Activated CD4-positive, alpha-beta T cell treated with anti-CD3 and anti-CD28 coated beads for 36 hours (primary cell): ENCODE measurements at regions of chr3 and their contacts with region 1.

Region 1: GRCh38 chr3:57007513-57008460 is 52.7 kb upstream of the SPATA12 start:
- DNase-seq: peak; percentile 53
- ATAC-seq: peak; percentile 83
- H3K4me3 Mint-ChIP-seq: no peak overlapping the region
- H3K27ac Mint-ChIP-seq: peak overlapping the region; percentile 59
- H3K4me1 Mint-ChIP-seq: peaks cover 5% of the 10 kb centered on the region
- H3K27me3 Mint-ChIP-seq: peaks cover 2% of the 10 kb centered on the region

Region 2: GRCh38 chr3:56878074-56878473 is 129.7 kb before region 1 on chr3:
- CTCF ChIA-PET with region 1: no interaction called
- POLR2A ChIA-PET with region 1: no interaction called
- intact Hi-C with region 1: no loop called
- DNase-seq: peak; percentile 79
- ATAC-seq: peak; percentile 87
- H3K4me3 Mint-ChIP-seq: peak overlapping the region; percentile 64
- H3K27ac Mint-ChIP-seq: peak overlapping the region; percentile 94
- H3K4me1 Mint-ChIP-seq: peaks cover 90% of the 10 kb centered on the region
- H3K27me3 Mint-ChIP-seq: no peaks in the 10 kb centered on the region

Region 3: DNA sequence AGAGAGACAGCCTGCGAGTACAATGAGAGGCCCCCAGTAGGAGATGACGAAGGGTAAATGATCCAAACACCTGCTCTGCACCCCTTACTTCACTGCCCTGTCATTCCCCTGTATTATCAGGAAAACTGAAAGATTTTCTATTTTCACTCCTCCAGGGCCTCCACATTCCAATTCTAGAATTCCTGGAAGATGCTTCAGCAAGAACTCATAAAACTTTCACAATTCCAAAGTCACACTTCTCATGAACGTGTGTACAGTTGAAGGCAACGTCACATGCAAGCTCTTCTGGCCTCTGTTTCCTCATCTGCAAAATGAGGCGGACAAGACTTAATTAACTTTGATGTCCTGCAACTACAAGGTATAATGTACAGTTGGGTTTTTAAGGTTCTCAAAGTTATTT is 10.1 kb before region 1 on chr3:
- CTCF ChIA-PET with region 1: interaction called, 30 read pairs
- POLR2A ChIA-PET with region 1: no interaction called
- intact Hi-C with region 1: no loop called
- DNase-seq: no peak
- ATAC-seq: no peak
- H3K4me3 Mint-ChIP-seq: no peak overlapping the region
- H3K27ac Mint-ChIP-seq: no peak overlapping the region
- H3K4me1 Mint-ChIP-seq: peaks cover 3% of the 10 kb centered on the region
- H3K27me3 Mint-ChIP-seq: no peaks in the 10 kb centered on the region

Region 4: GRCh38 chr3:57370341-57370740 is 362.6 kb after region 1 on chr3:
- CTCF ChIA-PET with region 1: no interaction called
- POLR2A ChIA-PET with region 1: no interaction called
- intact Hi-C with region 1: no loop called
- DNase-seq: no peak
- ATAC-seq: no peak
- H3K4me3 Mint-ChIP-seq: no peak overlapping the region
- H3K27ac Mint-ChIP-seq: no peak overlapping the region
- H3K4me1 Mint-ChIP-seq: no peaks in the 10 kb centered on the region
- H3K27me3 Mint-ChIP-seq: peaks cover 2% of the 10 kb centered on the region